Common myeloid progenitor, CD34-positive (primary cell): ENCODE measurements at regions of chr11 and their contacts with region 1.

Region 1: GRCh38 chr11:60251485-60252212 is 8.7 kb upstream of the MS4A4E start:
- DNase-seq: peak; percentile 55 to 67 (median 62)
- H3K4me3 ChIP-seq: no peak overlapping the region
- H3K27ac ChIP-seq: no peak overlapping the region
- H3K4me1 ChIP-seq: peaks cover 0 to 11% (median 4%) of the 10 kb centered on the region in 4 experiments
- H3K27me3 ChIP-seq: no peaks in the 10 kb centered on the region

Region 2: DNA sequence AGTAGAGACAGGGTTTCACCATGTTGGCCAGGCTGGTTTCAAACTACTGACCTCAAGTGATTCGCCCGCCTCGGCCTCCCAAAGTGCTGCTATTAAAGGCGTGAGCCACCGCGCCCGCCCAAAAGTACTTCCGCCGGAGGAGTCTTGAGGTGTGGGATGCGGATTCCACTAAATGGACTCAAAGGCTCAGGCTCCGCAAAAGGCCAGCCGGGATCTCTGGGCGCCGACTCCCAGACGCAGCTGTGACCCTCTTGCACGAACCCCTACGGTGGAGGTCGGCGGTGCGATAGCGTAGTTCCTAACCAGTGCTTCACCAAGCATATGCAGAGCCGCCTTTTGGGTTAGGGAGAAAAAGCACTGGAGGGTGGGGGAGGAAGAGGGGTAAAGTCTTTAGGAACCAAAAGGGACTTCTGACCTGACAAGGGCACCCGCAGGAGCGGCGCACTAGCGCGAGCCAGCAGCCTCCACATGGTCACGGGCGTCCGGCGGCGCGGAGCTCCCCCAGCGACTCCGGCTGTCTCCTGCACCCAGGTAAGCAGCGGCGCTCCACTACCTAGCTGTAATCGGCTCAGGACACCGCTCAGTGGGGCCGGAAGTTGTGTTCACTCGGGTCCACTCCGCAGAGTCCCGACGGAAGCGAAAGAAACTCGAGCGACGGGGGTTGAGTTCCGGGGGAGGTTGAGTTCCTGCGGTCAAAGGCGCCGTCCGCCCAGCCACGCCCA is 441.3 kb before region 1 on chr11 and contains the start of gene MRPL16:
- CTCF ChIA-PET with region 1: interaction called, 12 read pairs
- POLR2A ChIA-PET with region 1: no interaction called
- DNase-seq: peak; percentile 93 to 97 (median 96)
- H3K4me3 ChIP-seq: peak within 1 kb of the TSS; percentile 71 to 99 (median 97)
- H3K27ac ChIP-seq: peak within 1 kb of the TSS; percentile 62 to 88
- H3K4me1 ChIP-seq: peaks cover 20 to 62% (median 45%) of the 10 kb centered on the region in 4 experiments
- H3K27me3 ChIP-seq: no peaks in the 10 kb centered on the region

Region 3: GRCh38 chr11:59822989-59823566 is 428.6 kb before region 1 on chr11:
- CTCF ChIA-PET with region 1: interaction called, 20 read pairs
- POLR2A ChIA-PET with region 1: no interaction called
- DNase-seq: peak; percentile 77 to 85 (median 84)
- H3K4me3 ChIP-seq: peak overlapping the region in 2 of 7 experiments; percentile 15 to 46
- H3K27ac ChIP-seq: no peak overlapping the region
- H3K4me1 ChIP-seq: peaks cover 14 to 33% (median 24%) of the 10 kb centered on the region in 4 experiments
- H3K27me3 ChIP-seq: no peaks in the 10 kb centered on the region

Region 4: GRCh38 chr11:60127311-60127811 is 124.3 kb before region 1 on chr11:
- CTCF ChIA-PET with region 1: no interaction called
- POLR2A ChIA-PET with region 1: no interaction called
- DNase-seq: peak; percentile 27 to 83 (median 63)
- H3K4me3 ChIP-seq: no peak overlapping the region
- H3K27ac ChIP-seq: peak overlapping the region; percentile 18 to 23
- H3K4me1 ChIP-seq: peaks cover 3 to 37% (median 13%) of the 10 kb centered on the region in 4 experiments
- H3K27me3 ChIP-seq: no peaks in the 10 kb centered on the region

Region 5: GRCh38 chr11:60169264-60169915 is 82.3 kb before region 1 on chr11:
- CTCF ChIA-PET with region 1: interaction called, 13 read pairs
- POLR2A ChIA-PET with region 1: no interaction called
- DNase-seq: peak; percentile 69 to 91 (median 88)
- H3K4me3 ChIP-seq: no peak overlapping the region
- H3K27ac ChIP-seq: no peak overlapping the region
- H3K4me1 ChIP-seq: peaks cover 0 to 4% (median 0%) of the 10 kb centered on the region in 4 experiments
- H3K27me3 ChIP-seq: peaks cover 0 to 23% (median 4%) of the 10 kb centered on the region in 5 experiments

Region 6: GRCh38 chr11:60265373-60266214 is 13.9 kb after region 1 on chr11:
- CTCF ChIA-PET with region 1: interaction called, 24 read pairs
- POLR2A ChIA-PET with region 1: no interaction called
- DNase-seq: peak; percentile 44 to 64 (median 58)
- H3K4me3 ChIP-seq: no peak overlapping the region
- H3K27ac ChIP-seq: no peak overlapping the region
- H3K4me1 ChIP-seq: no peaks in the 10 kb centered on the region
- H3K27me3 ChIP-seq: no peaks in the 10 kb centered on the region